Prostate gland (tissue), 2 donors: ENCODE measurements at regions of chr13 and their contacts with region 1.

Region 1: GRCh38 chr13:40236566-40237168 is 429.8 kb downstream of the FOXO1 start:
- DNase-seq: peak; percentile 28
- H3K4me3 ChIP-seq: no peak overlapping the region
- H3K27ac ChIP-seq: peak overlapping the region; percentile 73 to 79
- H3K4me1 ChIP-seq: no peaks in the 10 kb centered on the region
- H3K27me3 ChIP-seq: no peaks in the 10 kb centered on the region
- CTCF ChIP-seq: no peak
- POLR2A ChIP-seq: no peak

Region 2: DNA sequence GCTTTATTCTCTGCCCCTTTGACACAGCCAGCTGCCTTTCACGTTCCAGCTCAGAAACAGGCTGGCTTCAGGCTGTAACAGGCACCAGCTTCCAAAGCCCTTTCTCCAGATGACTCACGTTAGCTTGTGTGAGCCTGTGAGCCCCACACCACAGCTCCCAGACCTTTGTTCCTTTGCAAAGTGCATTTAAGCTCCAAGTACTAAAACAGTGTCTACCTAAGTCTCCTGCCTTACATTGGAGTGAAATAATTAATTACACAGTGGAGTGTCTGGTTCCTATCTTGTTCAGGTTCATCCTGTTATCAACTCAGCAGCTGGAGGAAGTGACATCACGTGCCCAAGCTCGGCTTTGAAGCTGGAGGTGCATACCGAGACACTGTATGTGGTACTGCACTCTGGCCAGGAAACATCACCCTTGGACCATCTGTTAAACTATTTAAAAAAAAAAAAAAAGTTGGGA is 46.0 kb before region 1 on chr13:
- intact Hi-C with region 1: loop called (anchors 5 kb)
- DNase-seq: peak; percentile 30
- H3K4me3 ChIP-seq: no peak overlapping the region
- H3K27ac ChIP-seq: peak overlapping the region; percentile 42 to 50
- H3K4me1 ChIP-seq: no peaks in the 10 kb centered on the region
- H3K27me3 ChIP-seq: no peaks in the 10 kb centered on the region
- CTCF ChIP-seq: no peak
- POLR2A ChIP-seq: no peak

Region 3: DNA sequence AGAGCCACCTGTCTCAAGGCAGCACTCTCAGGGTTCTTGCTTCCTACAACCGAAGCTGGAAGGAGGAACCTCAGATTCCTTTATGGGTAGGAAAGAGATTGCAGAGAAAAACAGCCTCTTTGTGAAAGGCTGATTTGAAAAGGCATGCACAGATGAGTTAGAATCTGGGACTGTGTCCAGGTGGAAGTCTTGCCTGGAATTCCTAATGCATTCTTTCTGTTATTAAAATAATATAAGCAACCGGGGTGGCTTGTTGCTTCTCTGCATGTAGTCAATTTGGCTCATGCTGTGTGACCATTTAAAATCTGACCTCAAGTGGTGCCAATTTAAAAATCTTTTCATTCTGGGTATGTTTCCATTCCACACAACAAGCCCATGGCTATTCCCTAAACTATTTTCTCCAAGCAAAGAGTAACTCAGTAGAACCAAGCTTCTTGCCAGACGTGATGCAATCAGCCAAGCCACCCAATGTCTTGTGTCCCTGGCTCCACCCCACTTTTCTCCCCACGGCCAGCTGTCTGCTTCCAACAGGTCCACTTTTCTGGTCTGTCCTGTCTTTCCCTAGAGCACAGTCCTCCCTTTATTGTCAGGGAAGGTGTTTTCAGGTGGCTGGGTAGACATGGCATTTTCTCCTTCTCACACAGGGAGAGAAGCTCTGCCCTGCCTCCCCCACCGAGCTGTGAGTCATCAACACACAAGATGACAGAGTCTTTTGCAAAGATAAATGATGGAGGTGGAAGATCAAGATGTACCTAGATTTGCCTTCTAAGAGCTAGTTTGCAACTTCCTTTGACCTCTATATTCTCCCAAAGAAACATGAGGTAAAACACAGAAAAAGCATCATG is 35.5 kb after region 1 on chr13:
- intact Hi-C with region 1: loop called (anchors 2 kb)
- DNase-seq: peak; percentile 62
- H3K4me3 ChIP-seq: no peak overlapping the region
- H3K27ac ChIP-seq: peak overlapping the region; percentile 44 to 58
- H3K4me1 ChIP-seq: no peaks in the 10 kb centered on the region
- H3K27me3 ChIP-seq: no peaks in the 10 kb centered on the region
- CTCF ChIP-seq: no peak
- POLR2A ChIP-seq: no peak

Region 4: DNA sequence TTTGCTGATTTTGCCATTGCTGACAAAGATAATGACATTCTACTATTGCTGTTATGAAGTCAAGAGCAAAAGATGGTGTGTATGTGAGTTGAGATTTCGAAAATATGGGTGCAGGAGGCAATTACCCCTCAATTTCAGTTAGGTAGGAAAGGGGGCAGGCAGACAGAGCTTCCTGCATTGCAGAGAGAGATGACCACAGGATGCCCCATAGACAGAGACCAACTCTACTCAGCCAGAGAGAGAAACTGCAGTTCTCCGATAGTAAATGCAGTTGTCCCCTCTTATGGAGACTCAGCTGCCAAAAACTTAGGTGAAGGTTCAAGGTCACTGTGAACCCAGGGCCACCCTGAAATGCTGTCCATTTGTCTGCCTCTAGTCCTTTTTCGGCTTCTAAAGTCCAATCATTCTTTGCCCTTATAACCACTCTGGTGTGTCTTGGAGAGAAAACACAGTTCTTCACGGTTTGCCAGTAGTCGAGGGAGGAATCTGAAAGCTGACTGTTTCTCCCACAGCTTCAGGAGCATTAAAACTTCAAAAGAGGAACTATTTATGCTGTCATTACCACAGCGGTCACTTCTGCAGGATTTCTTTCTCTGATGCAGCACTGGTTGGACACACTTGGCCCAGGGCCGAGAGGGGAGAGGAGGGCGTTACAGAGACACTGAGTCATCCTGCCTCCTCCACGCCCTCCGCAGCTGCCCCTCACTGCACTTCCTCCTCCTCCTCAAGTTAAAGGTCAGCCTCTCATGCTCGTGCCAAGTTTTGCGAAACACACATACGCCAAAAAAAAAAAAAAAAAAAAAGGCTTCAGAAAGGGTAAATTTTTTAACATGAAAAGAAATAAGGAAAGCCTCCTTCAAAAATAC is 165.5 kb after region 1 on chr13:
- intact Hi-C with region 1: loop called (anchors 2 kb)
- DNase-seq: peak; percentile 55
- H3K4me3 ChIP-seq: no peak overlapping the region
- H3K27ac ChIP-seq: peak overlapping the region; percentile 30 to 56
- H3K4me1 ChIP-seq: peaks cover 7% of the 10 kb centered on the region
- H3K27me3 ChIP-seq: no peaks in the 10 kb centered on the region
- CTCF ChIP-seq: no peak
- POLR2A ChIP-seq: no peak